ENCODE measurements at regions of chr4 and their contacts with region 1.

Region 1: GRCh38 chr4:27000820-27001219 is 140.2 kb downstream of the STIM2 start:
- DNase-seq: no peak
- ATAC-seq: no peak

Region 2: DNA sequence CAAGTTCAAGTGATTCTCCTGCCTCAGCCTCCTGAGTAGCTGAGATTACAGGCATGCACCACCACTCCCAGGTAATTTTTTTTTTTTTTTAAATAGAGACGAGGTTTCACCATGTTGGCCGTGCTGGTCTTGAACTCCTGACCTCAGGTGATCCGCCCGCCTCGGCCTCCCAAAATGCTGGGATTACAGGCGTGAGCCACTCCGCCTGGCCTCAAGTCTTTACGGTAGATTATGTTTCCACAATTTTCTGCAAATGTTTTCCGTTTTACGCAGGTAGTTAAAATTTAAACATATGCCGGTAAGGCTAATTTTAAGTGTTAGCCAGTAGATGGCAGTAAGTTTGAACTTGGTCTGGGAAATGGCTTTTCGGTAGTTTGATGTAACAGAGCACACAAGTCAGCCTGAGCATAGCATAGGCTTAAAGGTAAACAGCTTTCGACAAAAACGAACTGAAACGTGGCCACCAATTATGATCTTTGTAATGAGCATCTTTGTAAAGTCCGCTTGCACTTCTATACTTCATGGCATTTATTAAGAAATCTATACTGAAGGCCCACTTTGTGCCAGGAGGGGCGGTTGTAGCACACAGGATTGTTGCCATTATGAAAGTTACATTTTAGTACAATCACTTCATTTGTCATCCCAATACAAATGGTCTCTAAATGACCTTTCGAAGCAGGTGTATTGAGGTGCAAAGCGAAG is 541.6 kb before region 1 on chr4:
- intact Hi-C with region 1: loop called (anchors 5 kb)
- DNase-seq: no peak
- ATAC-seq: peak; percentile 61

Region 3: DNA sequence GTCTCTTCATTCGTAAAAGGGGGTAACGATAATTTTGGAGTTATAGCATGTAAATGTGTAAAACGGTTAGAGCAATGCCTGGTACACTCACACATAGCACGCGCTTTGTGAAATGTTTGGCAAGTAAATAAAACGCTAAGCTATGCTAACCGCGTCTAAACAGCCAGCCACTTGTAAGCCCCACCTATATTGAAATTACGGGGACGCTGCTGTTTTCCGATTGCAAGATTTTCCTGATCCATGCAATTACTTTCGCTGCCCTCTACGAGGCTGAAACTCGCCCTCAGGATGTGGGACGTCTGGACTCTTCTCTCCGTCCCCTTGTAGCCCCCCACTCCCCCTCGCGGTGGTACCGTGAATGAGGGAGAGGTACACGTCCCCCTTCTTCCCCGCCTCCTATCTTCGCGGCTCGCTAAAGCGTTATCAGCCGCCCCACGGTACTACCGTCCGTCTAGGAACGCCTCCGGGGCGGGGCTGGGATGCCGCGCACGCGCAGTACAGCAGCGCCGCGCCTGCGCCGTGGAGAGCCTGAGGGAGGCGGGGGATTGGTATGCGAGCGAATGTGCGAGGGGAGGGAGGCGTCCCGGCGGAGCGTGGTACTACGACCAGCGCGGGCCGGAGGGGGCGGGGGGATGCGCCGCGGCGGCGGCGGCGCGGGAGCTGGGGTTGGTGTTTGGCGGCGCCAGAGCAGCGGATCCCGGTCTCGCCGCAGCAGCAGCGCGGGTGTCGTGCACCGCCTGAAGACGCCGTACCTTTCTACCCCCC is 140.5 kb before region 1 on chr4 and contains the start of gene STIM2:
- intact Hi-C with region 1: loop called (anchors 10 kb)
- DNase-seq: peak; percentile 97
- ATAC-seq: peak; percentile 91
- total RNA-seq, gene STIM2: 9.7 TPM

Region 4: DNA sequence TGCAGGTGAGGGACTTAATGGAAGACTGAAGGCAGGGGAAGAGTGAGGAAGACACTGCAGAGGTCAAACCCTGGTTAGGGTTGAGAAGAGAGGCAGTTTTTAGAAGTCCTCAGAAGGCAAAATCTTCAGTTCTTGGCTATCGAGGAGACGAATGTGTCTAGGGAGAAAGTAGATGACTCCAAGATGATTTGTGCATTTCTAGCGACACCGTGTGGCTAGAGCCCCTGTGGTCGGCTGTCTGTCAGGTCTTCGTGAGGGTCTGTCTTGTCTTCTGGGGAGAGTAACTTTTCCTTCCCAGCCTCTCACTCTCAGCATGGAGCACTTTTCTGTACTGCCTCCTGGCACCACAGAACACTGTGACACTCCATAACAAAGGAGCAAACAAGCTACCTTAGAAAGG is 317.9 kb after region 1 on chr4:
- intact Hi-C with region 1: no loop called
- DNase-seq: no peak
- ATAC-seq: no peak

Region 5: DNA sequence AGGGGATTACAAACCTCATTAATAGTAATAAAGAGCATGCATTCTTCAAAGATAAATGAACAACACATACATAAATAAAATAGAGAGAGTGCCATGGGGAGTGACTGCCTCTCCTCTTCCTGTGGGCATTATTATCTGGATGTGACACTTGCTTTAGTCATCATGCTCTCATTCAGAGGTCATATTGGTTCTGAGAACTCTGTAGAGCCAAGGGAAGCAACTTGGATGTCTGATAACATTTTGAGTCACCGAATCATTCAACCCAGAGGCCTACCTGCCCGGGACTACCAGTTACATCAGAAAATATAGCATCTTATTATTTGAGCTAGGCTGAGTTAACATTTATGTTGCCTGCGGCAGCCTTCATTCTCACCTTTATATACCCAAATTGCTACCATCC is 349.3 kb after region 1 on chr4:
- intact Hi-C with region 1: no loop called
- DNase-seq: no peak
- ATAC-seq: no peak